Activated T-helper 2 cell treated with anti-CD3 and anti-CD28 coated beads, Interferon-gamma antibody, Interleukin-2, Interleukin-4, amounts not matched to agents 10 μg/mL and 5 μg/mL and 100 μg/mL, durations not matched to agents 14 hours and 24 hours and 36 hours (primary cell): ENCODE measurements at regions of chr5 and their contacts with region 1.

Region 1: GRCh38 chr5:157148734-157149615 is 6.3 kb upstream of the MED7 start:
- DNase-seq: peak; percentile 77
- H3K4me3 Mint-ChIP-seq: no peak overlapping the region
- H3K27ac Mint-ChIP-seq: peak overlapping the region; percentile 70
- H3K4me1 Mint-ChIP-seq: peaks cover 39% of the 10 kb centered on the region
- H3K27me3 Mint-ChIP-seq: no peaks in the 10 kb centered on the region

Region 2: GRCh38 chr5:157167214-157167621 is 18.2 kb after region 1 on chr5:
- intact Hi-C with region 1: loop called (anchors 1 kb)
- DNase-seq: peak; percentile 9
- H3K4me3 Mint-ChIP-seq: peak overlapping the region; percentile 43
- H3K27ac Mint-ChIP-seq: peak overlapping the region; percentile 86
- H3K4me1 Mint-ChIP-seq: peaks cover 75% of the 10 kb centered on the region
- H3K27me3 Mint-ChIP-seq: no peaks in the 10 kb centered on the region

Region 3: DNA sequence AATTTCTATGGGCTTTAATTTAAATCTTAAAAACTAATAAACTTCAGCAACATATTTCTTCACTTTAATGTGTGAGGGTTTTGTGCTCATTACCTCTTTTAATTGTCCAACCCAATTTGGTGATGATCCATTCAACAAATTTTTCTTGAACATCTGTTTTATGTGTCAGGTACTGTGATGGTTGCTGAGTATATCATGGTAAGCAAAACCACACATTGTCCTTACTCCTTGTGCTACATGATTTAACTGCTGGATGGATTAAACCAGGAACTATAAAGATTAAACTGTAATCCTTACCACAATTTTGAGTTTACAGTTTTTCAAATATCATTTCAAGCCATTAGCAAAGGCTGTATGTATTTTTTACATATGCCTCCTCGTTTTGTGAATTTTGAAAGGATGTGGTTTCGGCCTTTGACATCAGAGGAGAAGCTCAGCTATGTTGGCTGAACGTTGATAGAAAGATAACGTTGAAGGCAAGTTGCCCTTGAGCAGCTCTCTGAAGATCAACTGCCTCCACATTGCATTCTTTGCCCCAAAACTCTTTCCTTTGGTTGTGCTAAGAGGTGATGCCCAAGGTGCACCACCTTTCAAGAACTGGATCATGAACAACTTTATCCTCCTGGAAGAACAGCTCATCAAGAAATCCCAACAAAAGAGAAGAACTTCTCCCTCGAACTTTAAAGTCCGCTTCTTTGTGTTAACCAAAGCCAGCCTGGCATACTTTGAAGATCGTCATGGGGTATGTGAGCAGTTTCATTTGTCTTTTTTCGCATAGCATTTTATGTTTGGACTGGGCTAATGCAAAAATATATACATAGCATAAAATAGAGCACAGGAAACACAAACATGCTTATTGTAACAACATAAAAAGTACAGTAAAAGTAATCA is 31.6 kb after region 1 on chr5 and contains the start of gene ITK:
- intact Hi-C with region 1: loop called (anchors 1 kb)
- DNase-seq: peak; percentile 53
- H3K4me3 Mint-ChIP-seq: peak within 1 kb of the TSS; percentile 99
- H3K27ac Mint-ChIP-seq: peak within 1 kb of the TSS; percentile 98
- H3K4me1 Mint-ChIP-seq: peaks cover 44% of the 10 kb centered on the region
- H3K27me3 Mint-ChIP-seq: no peaks in the 10 kb centered on the region
- total RNA-seq, gene ITK: 313 and 319 TPM in 2 replicates

Region 4: DNA sequence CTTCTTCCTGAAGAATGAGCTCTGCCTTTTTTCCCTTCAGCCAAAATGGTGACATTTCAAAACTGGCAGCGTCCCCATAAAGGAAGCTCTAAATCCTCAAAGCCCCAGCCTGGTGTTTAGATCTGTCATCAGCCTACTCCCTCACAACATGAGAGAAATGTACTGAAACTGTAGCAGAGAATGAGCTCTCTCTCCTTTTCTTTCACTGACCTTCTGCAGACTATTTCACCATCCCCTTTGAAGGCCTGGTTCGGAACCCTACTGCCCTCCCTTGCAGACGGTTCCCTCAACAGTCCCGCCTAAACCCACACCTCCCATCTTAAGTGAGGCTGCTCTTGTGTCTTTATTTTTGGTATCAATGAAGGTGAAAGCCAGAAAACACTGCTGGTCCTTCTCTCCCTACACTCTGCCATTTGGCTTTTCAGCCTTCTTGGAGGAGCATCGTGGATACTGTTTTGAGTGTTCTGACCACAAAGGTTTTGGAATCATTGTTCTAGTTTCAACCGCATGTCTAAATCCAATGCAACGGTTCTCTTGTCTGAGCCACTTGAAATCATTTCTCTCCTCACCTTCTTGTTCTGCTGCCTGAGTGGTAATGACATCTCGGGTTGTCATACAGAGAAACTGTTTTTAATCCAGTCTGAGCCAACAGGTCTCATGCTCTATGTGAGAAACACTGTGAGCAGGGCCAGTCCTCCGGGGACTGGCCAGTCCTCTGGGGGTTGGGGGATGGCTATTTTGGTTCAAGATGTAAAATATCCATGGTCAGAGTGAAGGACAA is 70.7 kb after region 1 on chr5:
- intact Hi-C with region 1: loop called (anchors 1 kb)
- DNase-seq: no peak
- H3K4me3 Mint-ChIP-seq: peak overlapping the region; percentile 40
- H3K27ac Mint-ChIP-seq: peak overlapping the region; percentile 94
- H3K4me1 Mint-ChIP-seq: peaks cover 79% of the 10 kb centered on the region
- H3K27me3 Mint-ChIP-seq: no peaks in the 10 kb centered on the region

Region 5: DNA sequence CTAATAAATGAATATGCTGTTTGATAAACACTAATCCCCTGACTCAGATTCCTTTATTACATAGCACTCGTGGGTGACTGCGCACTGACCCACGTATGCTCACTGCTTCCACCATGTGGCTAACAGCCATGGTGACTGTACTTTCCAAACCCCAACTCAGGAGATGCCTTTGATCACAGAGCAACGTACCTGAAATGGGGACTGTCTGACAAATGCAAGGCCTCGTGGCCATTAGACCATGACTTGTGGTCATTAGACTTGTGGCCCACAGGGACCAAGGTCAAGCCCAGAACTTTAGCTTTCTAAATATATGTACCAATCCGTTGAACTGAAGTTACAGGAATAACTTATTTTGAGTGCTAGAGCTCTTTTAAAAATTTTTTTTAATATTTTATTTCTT is 163.5 kb after region 1 on chr5:
- intact Hi-C with region 1: loop called (anchors 1 kb)
- DNase-seq: peak; percentile 47
- H3K4me3 Mint-ChIP-seq: no peak overlapping the region
- H3K27ac Mint-ChIP-seq: peak overlapping the region; percentile 70
- H3K4me1 Mint-ChIP-seq: peaks cover 20% of the 10 kb centered on the region
- H3K27me3 Mint-ChIP-seq: no peaks in the 10 kb centered on the region